ENCODE measurements at regions of chr7 and their contacts with region 1.

Region 1: DNA sequence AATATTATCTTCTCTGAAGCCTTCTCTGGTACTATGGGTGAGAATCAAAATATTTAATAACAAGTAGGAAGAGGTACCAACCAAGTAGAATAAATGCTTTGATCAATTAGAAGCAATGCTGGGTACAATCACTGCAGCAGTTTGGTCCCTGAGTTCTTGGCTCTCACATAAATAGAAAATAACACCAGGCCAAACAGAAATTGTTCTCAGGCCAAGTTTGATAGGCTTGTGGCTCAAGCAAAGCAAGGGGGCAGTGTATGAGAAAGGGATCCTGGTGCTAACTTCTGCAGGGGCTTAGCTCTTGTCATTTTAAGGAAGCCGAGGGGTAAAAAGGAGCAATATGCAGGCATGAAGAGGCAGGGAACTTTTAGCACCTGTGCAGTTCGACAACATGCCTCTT is 146.8 kb upstream of the TMEM229A start:
- DNase-seq: no peak
- CTCF ChIP-seq: no peak

Region 2: GRCh38 chr7:124168616-124169015 is 11.0 kb before region 1 on chr7:
- CTCF ChIA-PET with region 1: interaction called, 10 read pairs
- POLR2A ChIA-PET with region 1: no interaction called
- DNase-seq: no peak
- CTCF ChIP-seq: no peak

Measured in GM10248 (cell line).